ENCODE measurements at regions of chrX and their contacts with region 1.

Region 1: DNA sequence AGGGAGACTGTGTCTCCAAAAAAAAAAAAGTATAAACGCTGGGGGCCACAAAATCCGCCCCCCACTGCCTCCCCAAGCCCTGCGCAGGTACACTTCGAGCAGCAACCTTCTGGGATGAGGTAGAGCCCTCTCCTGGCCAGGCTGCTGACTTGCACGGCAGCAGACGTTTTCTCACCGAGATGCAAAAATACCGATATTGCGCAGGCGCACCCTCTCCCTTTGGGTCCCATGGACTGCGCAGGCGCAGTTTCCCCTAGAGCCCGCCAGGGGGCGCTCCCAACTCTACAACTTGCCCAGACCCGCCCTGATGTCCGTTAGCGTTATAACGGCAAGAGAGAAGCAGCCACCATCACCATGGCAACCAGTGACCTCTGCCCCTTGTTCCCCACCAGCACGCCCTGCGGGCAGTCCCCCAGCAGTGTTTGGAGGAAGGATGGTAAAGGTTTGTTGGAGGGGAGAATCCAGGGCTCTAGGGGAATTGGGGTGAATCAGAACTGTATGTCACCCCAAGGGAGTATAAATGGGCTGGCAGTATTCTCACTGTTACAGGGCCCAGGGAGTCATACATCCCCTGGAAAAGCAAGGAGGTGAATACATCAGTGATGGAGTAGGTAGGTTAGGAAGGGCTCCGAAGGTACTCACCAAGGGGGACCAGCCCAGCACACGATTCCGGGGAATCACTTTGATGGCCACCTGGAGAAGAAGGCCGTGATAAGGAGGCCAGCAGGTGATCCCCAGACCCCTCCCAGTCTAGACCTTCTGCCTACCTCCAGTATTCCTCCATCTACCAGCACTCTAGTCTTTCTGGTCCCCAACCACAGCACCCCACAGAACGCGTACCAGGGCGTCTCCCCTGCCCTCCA is 1.5 kb downstream of the PIM2 start:
- DNase-seq: peak; percentile 87 to 93
- ATAC-seq: peak; percentile 76 to 81 (median 78)
- H3K4me3 ChIP-seq: peak overlapping the region; percentile 33
- H3K27ac ChIP-seq: peak overlapping the region; percentile 42
- H3K4me1 ChIP-seq: no peaks in the 10 kb centered on the region
- H3K27me3 ChIP-seq: no peaks in the 10 kb centered on the region
- CTCF ChIP-seq: peak; percentile 87

Region 2: GRCh38 chrX:48648336-48648751 is 269.0 kb before region 1 on chrX:
- intact Hi-C with region 1: loop called in 1 of 2 experiments (anchors 10 kb)
- DNase-seq: peak in 1 of 2 donors; percentile 55
- ATAC-seq: peak; percentile 83 to 95 (median 92)
- H3K4me3 ChIP-seq: no peak overlapping the region
- H3K27ac ChIP-seq: peak overlapping the region; percentile 19
- H3K4me1 ChIP-seq: peaks cover 5% of the 10 kb centered on the region
- H3K27me3 ChIP-seq: no peaks in the 10 kb centered on the region
- CTCF ChIP-seq: peak; percentile 36

Region 3: DNA sequence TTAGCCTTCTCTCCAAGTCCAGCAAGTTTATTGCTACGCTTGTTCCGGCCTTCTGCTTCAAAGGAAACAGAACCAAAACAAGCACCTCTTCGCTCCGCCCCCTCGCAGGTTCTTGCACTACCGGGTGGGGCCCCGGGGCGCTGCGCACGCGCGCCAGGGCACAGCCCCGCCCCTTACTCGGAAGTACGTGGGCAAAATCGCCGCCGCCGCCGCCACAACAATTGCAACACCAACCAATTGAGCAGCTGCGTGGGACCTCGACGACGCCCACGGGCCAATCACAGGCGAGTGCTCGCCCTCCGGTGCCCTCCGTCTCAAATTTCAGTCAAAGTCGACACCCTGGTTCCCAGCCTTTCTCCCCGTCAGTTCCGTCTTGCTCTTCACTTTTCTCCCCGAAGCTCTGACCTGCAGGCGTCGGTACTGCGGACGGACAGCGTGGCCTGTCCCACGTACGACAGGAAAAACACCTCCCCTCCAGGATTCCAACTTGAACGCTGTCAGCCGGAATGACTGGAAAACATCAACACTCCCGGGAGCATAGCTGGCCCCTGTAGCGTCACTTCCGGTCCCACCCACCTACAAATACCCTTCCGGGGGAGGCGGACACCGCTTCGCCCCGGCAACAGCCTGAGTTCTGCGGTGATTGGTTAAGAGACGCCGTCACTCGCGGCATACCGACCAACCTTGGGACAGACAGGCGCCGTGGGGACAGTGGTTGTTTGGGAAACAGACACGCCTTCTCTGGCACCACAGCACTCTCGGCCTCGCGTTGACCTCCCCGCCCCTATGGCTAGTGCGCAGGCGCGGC is 40.7 kb after region 1 on chrX:
- intact Hi-C with region 1: loop called in 1 of 2 experiments (anchors 5 kb)
- DNase-seq: peak; percentile 95 to 98
- ATAC-seq: peak; percentile 91 to 94 (median 93)
- H3K4me3 ChIP-seq: peak overlapping the region; percentile 76
- H3K27ac ChIP-seq: peak overlapping the region; percentile 93
- H3K4me1 ChIP-seq: peaks cover 6% of the 10 kb centered on the region
- H3K27me3 ChIP-seq: no peaks in the 10 kb centered on the region
- CTCF ChIP-seq: no peak

Region 4: DNA sequence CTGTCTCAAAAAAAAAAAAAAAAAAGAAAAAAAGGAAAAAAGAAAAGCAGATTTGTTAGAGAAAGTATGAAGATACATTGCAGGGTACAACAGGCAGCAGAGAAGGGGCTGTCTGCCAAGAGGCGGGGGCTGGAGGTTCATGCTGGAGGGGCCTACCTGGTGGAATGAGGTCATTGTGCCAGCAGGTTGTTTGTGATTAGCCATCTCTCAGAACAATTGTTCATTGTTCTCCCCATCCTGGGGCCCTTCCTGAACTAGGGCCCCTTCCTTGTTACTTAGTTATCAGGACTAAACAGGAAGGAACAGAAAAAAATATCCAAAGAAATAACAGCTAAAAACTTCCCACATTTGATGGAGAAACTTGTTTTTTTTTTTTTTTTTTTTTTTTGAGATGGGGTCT is 220.1 kb after region 1 on chrX:
- intact Hi-C with region 1: no loop called
- DNase-seq: no peak
- ATAC-seq: no peak
- H3K4me3 ChIP-seq: no peak overlapping the region
- H3K27ac ChIP-seq: no peak overlapping the region
- H3K4me1 ChIP-seq: no peaks in the 10 kb centered on the region
- H3K27me3 ChIP-seq: no peaks in the 10 kb centered on the region
- CTCF ChIP-seq: no peak

Region 5: GRCh38 chrX:49147936-49148335 is 230.6 kb after region 1 on chrX:
- intact Hi-C with region 1: no loop called
- DNase-seq: no peak
- ATAC-seq: no peak
- H3K4me3 ChIP-seq: no peak overlapping the region
- H3K27ac ChIP-seq: no peak overlapping the region
- H3K4me1 ChIP-seq: no peaks in the 10 kb centered on the region
- H3K27me3 ChIP-seq: no peaks in the 10 kb centered on the region
- CTCF ChIP-seq: no peak